MCF 10A (cell line): ENCODE measurements at regions of chr1 and their contacts with region 1.

Region 1: GRCh38 chr1:214261206-214262123 is 19.5 kb upstream of the SMYD2 start:
- DNase-seq: peak; percentile 93
- H3K4me3 Mint-ChIP-seq: no peak overlapping the region
- H3K27ac Mint-ChIP-seq: no peak overlapping the region
- H3K4me1 Mint-ChIP-seq: peaks cover 12% of the 10 kb centered on the region
- H3K27me3 Mint-ChIP-seq: peaks cover 61% of the 10 kb centered on the region
- CTCF ChIP-seq: peak; percentile 100

Region 2: DNA sequence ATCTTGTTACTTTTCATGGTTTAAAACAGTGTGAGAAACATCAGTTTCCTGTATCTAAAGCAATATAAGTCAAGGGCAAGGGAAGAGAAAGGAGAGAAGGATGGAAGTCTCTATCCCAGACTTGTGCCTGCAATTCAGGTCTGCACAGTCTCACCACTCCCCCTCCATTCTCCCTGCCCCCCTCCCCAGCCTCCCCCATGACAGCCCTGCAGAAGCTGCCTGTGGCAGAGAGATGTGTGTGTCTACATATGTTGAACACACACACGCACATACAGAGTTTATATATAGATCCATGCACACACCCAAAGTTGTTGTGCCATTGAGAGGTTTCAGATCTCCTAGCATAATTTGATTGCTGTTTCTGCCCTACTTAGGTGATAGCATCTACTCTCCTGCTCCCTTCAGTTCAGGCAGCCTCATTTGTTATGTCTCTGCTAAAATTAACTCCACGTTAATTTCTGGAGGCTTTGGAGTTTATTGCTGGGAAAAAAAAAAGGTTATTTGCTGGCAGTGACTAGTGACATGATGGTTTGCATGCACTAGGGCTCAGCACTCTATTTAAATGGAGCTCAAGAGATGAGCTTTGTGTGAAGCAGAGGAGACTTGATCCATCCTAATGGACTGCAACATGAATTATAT is 105.4 kb before region 1 on chr1:
- CTCF ChIA-PET with region 1: interaction called, 12 read pairs
- POLR2A ChIA-PET with region 1: no interaction called
- intact Hi-C with region 1: no loop called
- DNase-seq: no peak
- H3K4me3 Mint-ChIP-seq: no peak overlapping the region
- H3K27ac Mint-ChIP-seq: no peak overlapping the region
- H3K4me1 Mint-ChIP-seq: no peaks in the 10 kb centered on the region
- H3K27me3 Mint-ChIP-seq: peaks cover 74% of the 10 kb centered on the region
- CTCF ChIP-seq: no peak

Region 3: GRCh38 chr1:214224611-214225354 is 36.7 kb before region 1 on chr1:
- CTCF ChIA-PET with region 1: interaction called, 102 read pairs
- POLR2A ChIA-PET with region 1: no interaction called
- intact Hi-C with region 1: no loop called
- DNase-seq: no peak
- H3K4me3 Mint-ChIP-seq: no peak overlapping the region
- H3K27ac Mint-ChIP-seq: no peak overlapping the region
- H3K4me1 Mint-ChIP-seq: peaks cover 4% of the 10 kb centered on the region
- H3K27me3 Mint-ChIP-seq: peaks cover 21% of the 10 kb centered on the region
- CTCF ChIP-seq: no peak

Region 4: GRCh38 chr1:214281021-214281719 is 19.7 kb after region 1 on chr1 and contains the start of gene SMYD2:
- CTCF ChIA-PET with region 1: interaction called, 175 read pairs
- POLR2A ChIA-PET with region 1: interaction called, 14 read pairs
- intact Hi-C with region 1: no loop called
- DNase-seq: peak; percentile 84
- H3K4me3 Mint-ChIP-seq: peak within 1 kb of the TSS; percentile 89
- H3K27ac Mint-ChIP-seq: peak within 1 kb of the TSS; percentile 84
- H3K4me1 Mint-ChIP-seq: peaks cover 37% of the 10 kb centered on the region
- H3K27me3 Mint-ChIP-seq: no peaks in the 10 kb centered on the region
- CTCF ChIP-seq: no peak
- total RNA-seq, gene SMYD2: 54.5 and 75.1 TPM in 2 replicates

Region 5: DNA sequence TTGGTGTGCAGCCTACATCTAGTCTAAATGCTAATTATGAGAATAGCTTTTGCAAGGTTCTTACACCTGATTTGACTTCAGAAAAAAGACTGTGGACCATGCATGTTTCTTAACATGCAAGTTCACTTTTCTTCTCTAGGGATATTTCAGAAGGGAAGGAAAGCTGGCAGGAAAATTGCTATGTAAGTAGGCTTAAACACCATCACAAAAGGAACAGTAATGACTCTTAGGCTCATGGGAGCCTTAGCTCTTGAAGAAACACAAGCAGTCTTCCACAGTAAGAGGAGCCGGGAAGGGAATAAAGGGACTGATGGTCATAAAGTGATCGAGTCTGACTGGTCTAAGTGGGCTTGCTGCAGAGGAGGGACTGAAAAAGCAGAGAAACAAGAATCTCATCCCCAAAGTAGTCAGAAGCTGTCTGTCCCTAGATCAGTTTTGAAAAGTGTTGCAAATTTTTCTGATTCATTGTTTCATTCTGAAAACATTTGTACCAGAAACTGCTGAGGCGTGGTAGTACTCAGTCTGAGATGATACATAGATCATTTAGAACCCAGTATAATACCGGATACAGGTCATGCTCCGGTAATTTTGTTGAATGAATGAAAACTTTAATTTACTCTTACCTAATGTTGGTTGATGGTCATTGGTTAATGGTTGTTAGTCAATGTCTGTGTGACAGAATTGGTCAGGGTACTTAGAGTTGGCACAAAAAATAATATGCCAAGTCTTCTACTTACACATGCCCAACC is 60.4 kb after region 1 on chr1:
- CTCF ChIA-PET with region 1: interaction called, 918 read pairs
- POLR2A ChIA-PET with region 1: interaction called, 33 read pairs
- intact Hi-C with region 1: loop called (anchors 2 kb)
- DNase-seq: no peak
- H3K4me3 Mint-ChIP-seq: no peak overlapping the region
- H3K27ac Mint-ChIP-seq: no peak overlapping the region
- H3K4me1 Mint-ChIP-seq: no peaks in the 10 kb centered on the region
- H3K27me3 Mint-ChIP-seq: no peaks in the 10 kb centered on the region
- CTCF ChIP-seq: no peak

Region 6: GRCh38 chr1:214542275-214543199 is 281.1 kb after region 1 on chr1:
- CTCF ChIA-PET with region 1: interaction called, 14 read pairs
- POLR2A ChIA-PET with region 1: no interaction called
- intact Hi-C with region 1: no loop called
- DNase-seq: no peak
- H3K4me3 Mint-ChIP-seq: no peak overlapping the region
- H3K27ac Mint-ChIP-seq: peak overlapping the region; percentile 32
- H3K4me1 Mint-ChIP-seq: peaks cover 87% of the 10 kb centered on the region
- H3K27me3 Mint-ChIP-seq: no peaks in the 10 kb centered on the region
- CTCF ChIP-seq: no peak

Region 7: GRCh38 chr1:214632091-214632490 is 370.6 kb after region 1 on chr1:
- CTCF ChIA-PET with region 1: interaction called, 80 read pairs
- POLR2A ChIA-PET with region 1: no interaction called
- intact Hi-C with region 1: loop called (anchors 5 kb)
- DNase-seq: no peak
- H3K4me3 Mint-ChIP-seq: no peak overlapping the region
- H3K27ac Mint-ChIP-seq: peak overlapping the region; percentile 66
- H3K4me1 Mint-ChIP-seq: peaks cover 4% of the 10 kb centered on the region
- H3K27me3 Mint-ChIP-seq: no peaks in the 10 kb centered on the region
- CTCF ChIP-seq: no peak